ENCODE measurements at regions of chr4 and their contacts with region 1.

Region 1: GRCh38 chr4:164779811-164780216 is 25.9 kb downstream of the SMIM31 start:
- DNase-seq: no peak
- ATAC-seq: no peak
- H3K4me3 ChIP-seq: no peak overlapping the region
- H3K27ac ChIP-seq: no peak overlapping the region
- H3K4me1 ChIP-seq: no peaks in the 10 kb centered on the region
- H3K27me3 ChIP-seq: no peaks in the 10 kb centered on the region

Region 2: DNA sequence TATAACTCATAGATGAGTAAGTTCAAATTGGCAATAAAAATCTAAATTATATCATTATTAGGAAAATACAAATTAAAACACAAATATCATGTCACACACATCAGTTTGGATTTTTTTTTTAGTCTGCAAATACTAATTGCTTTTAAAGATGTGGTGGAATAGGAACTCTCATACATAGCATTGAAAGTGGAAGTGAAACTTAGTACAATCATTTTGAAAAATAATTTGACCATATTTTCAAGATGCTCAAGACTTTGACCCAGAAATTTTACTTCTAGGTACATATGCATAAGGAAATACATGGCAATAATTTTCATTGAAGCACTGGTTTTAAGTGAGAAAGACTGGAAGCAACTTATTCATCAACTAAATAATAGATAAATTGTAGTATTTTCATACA is 173.3 kb before region 1 on chr4:
- intact Hi-C with region 1: no loop called
- DNase-seq: no peak
- ATAC-seq: no peak
- H3K4me3 ChIP-seq: no peak overlapping the region
- H3K27ac ChIP-seq: no peak overlapping the region
- H3K4me1 ChIP-seq: no peaks in the 10 kb centered on the region
- H3K27me3 ChIP-seq: no peaks in the 10 kb centered on the region

Region 3: DNA sequence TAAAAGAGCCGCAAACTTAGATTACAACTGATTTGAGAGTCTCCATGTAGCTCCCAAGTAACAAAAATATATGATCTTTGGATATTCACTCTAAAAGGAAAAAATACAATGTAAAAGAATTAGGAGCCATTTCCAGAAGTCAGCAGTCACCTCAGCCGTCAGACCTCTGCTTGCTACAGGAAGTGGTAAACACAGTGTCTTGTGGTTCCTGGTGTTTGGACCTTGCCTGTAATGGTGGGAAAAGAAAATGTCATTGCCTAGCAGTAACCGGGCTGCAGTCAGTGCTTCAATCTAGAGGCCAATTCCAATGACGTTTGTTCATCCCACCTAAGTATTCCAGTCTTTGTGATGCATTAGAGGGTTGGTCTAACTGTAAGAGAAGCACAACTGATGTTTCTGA is 54.7 kb before region 1 on chr4:
- intact Hi-C with region 1: no loop called
- DNase-seq: no peak
- ATAC-seq: no peak
- H3K4me3 ChIP-seq: no peak overlapping the region
- H3K27ac ChIP-seq: no peak overlapping the region
- H3K4me1 ChIP-seq: no peaks in the 10 kb centered on the region
- H3K27me3 ChIP-seq: no peaks in the 10 kb centered on the region

Region 4: DNA sequence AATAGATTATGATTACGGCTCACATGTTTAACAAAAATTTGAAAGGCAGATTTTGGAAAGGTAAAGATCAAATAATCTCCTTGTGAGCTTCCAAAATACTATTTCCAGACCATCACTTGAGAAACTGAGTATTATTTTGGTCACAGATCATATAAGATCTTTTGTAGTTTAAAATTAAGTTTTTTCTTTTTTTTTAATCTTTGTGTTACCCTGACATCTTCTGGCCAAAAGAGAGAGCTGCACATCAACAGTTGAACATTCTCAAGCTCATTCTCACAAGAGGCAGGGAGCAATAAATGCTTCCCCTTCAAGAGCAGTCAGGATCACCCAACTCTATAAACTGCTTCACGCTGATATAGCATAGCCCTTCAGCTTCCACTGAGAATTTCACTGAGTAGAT is 317.0 kb after region 1 on chr4:
- intact Hi-C with region 1: loop called in 2 of 4 experiments (anchors 10 kb)
- DNase-seq: no peak
- ATAC-seq: no peak
- H3K4me3 ChIP-seq: no peak overlapping the region
- H3K27ac ChIP-seq: no peak overlapping the region
- H3K4me1 ChIP-seq: no peaks in the 10 kb centered on the region
- H3K27me3 ChIP-seq: no peaks in the 10 kb centered on the region

Measured in right cardiac atrium (tissue), 5 donors.